ENCODE measurements at regions of chr6 and their contacts with region 1.

Region 1: DNA sequence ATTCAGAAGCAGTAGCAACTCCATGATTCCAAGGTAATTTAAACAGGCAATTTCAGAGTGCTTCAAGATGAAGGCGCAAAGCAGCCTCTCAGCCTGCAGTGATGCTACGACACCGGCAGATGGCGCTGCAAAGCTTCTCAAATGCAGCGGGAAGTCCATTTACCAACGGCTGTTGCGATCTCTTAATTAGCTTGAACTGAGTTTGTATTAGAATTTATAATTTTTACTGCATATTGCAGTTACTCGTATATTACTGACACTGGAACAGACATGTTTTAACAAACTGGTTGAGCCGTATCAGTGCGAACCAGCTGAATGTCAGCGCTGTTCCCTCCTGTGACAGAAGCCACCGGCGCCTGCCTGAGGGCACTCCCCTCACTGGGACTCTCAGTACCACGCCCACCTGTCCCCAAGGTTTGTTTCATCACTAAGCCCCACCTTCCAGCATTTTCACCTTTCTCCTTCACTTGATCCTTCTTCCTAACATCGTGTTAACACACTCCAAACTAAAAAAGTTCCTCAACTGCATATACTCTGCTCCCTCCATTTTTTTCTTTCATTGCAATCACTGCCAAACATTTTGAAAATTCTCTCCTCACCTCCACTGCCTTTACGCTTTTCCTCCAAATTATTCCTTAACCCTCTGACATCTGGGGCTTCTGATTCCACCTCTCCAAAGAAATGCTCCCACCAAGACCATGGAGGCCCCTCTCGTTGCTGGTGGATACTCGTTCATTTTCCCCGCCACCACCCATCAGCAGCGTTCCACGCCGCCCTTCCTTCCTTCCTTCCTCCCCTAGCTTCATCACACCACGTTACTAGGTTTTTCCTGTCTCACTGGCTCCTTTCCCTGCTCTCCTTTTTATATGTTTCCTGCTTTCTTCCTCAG is 14.5 kb downstream of the GNL1 start:
- DNase-seq: peak; percentile 31
- H3K4me3 ChIP-seq: no peak overlapping the region
- H3K27me3 ChIP-seq: no peaks in the 10 kb centered on the region
- CTCF ChIP-seq: peak; percentile 99

Region 2: DNA sequence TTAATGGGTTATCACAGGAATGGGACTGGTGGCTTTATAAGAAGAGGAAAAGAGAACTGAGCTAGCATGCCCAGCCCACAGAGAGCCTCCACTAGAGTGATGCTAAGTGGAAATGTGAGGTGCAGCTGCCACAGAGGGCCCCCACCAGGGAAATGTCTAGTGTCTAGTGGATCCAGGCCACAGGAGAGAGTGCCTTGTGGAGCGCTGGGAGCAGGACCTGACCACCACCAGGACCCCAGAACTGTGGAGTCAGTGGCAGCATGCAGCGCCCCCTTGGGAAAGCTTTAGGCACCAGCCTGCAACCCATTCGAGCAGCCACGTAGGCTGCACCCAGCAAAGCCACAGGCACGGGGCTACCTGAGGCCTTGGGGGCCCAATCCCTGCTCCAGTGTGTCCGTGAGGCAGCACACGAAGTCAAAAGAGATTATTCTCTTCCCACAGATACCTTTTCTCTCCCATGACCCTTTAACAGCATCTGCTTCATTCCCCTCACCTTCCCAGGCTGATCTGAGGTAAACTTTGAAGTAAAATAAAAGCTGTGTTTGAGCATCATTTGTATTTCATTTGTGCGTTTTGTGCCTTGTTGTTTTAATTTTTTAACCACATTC is 48.0 kb before region 1 on chr6:
- CTCF ChIA-PET with region 1: interaction called, 13 read pairs
- POLR2A ChIA-PET with region 1: no interaction called
- DNase-seq: no peak
- H3K4me3 ChIP-seq: no peak overlapping the region
- H3K27me3 ChIP-seq: no peaks in the 10 kb centered on the region
- CTCF ChIP-seq: peak; percentile 27

Region 3: GRCh38 chr6:30556066-30556905 is 14.5 kb after region 1 on chr6 and contains the start of gene GNL1:
- CTCF ChIA-PET with region 1: interaction called, 37 read pairs
- POLR2A ChIA-PET with region 1: no interaction called
- DNase-seq: peak; percentile 30
- H3K4me3 ChIP-seq: peak within 1 kb of the TSS; percentile 65
- H3K27me3 ChIP-seq: no peaks in the 10 kb centered on the region
- CTCF ChIP-seq: no peak; the same call in 1 of the 2 replicates
- polyA plus RNA-seq, gene GNL1: 47.4 and 47.6 TPM in 2 replicates

Region 4: GRCh38 chr6:30600451-30600961 is 58.7 kb after region 1 on chr6:
- CTCF ChIA-PET with region 1: interaction called, 56 read pairs
- POLR2A ChIA-PET with region 1: no interaction called
- DNase-seq: no peak
- H3K4me3 ChIP-seq: no peak overlapping the region
- H3K27me3 ChIP-seq: no peaks in the 10 kb centered on the region
- CTCF ChIP-seq: no peak

Measured in BJ (cell line).